Activated CD4-positive, alpha-beta memory T cell treated with anti-CD3 and anti-CD28 coated beads for 36 hours (primary cell): ENCODE measurements at regions of chr5 and their contacts with region 1.

Region 1: GRCh38 chr5:129836321-129836720 is 67.9 kb upstream of the CHSY3 start:
- DNase-seq: no peak
- H3K4me3 Mint-ChIP-seq: no peak overlapping the region
- H3K27ac Mint-ChIP-seq: no peak overlapping the region
- H3K4me1 Mint-ChIP-seq: no peaks in the 10 kb centered on the region
- H3K27me3 Mint-ChIP-seq: peaks cover 11% of the 10 kb centered on the region

Region 2: GRCh38 chr5:129746876-129747275 is 89.4 kb before region 1 on chr5:
- CTCF ChIA-PET with region 1: no interaction called
- POLR2A ChIA-PET with region 1: no interaction called
- intact Hi-C with region 1: no loop called
- DNase-seq: no peak
- H3K4me3 Mint-ChIP-seq: no peak overlapping the region
- H3K27ac Mint-ChIP-seq: no peak overlapping the region
- H3K4me1 Mint-ChIP-seq: no peaks in the 10 kb centered on the region
- H3K27me3 Mint-ChIP-seq: no peaks in the 10 kb centered on the region

Region 3: GRCh38 chr5:129852747-129853352 is 16.5 kb after region 1 on chr5:
- CTCF ChIA-PET with region 1: interaction called, 14 read pairs
- POLR2A ChIA-PET with region 1: no interaction called
- intact Hi-C with region 1: no loop called
- DNase-seq: peak; percentile 80
- H3K4me3 Mint-ChIP-seq: no peak overlapping the region
- H3K27ac Mint-ChIP-seq: no peak overlapping the region
- H3K4me1 Mint-ChIP-seq: peaks cover 2% of the 10 kb centered on the region
- H3K27me3 Mint-ChIP-seq: peaks cover 5% of the 10 kb centered on the region